ENCODE measurements at regions of chr16 and their contacts with region 1.

Region 1: GRCh38 chr16:3457434-3458252 is 14.2 kb downstream of the NAA60 start:
- DNase-seq: peak; percentile 49
- ATAC-seq: peak; percentile 93
- H3K4me3 ChIP-seq: peak overlapping the region; percentile 77
- H3K27ac ChIP-seq: peak overlapping the region; percentile 94
- H3K4me1 ChIP-seq: peaks cover 21% of the 10 kb centered on the region
- H3K27me3 ChIP-seq: no peaks in the 10 kb centered on the region
- CTCF ChIP-seq: peak; percentile 46 to 71 (median 61)
- EP300 ChIP-seq: no peak
- POLR2A ChIP-seq: peak; percentile 98
- RAD21 ChIP-seq: peak; percentile 37; the same call in 1 of the 2 replicates

Region 2: DNA sequence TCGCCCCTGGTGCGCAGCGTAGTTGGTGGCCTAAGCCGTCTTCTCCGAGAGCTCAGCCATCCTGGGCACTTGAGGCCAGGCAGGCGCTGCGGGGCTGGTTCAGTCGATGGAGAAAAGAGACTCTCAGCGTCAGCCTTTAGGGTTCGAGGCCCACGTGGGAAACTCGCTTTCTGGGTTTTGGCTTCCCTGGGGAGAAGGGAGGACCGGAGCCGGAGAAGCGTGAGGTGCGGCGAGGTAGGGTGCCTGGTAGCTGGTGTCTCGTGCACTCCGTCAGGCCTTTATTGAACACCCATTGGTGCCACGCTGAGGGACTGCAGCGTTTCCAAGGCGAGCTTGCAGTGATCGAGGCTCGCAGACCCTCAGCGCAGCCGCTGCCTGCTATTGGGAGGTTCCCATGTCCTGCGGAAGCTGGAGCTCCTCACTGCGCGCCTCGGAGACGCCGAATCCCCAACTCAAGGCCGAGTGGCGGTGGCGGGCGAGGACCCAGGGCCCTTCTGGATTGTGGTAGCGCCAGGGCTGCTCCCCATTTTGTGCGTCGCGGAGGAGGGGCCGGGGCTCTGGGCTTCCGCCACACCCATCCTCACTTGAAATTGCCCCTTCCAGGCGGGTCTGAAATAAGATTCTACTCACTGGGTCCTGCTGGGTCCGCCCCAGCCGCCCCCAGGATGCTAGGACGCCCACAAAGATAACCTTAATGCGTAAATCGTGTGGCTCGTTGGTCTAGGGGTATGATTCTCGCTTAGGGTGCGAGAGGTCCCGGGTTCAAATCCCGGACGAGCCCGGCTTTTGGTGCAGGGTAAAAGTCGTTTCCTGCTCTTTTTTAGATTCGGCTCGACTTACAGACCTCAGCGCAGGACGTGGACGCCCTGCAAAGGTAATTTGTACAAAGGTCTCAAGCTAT is 268.5 kb before region 1 on chr16:
- CTCF ChIA-PET with region 1: no interaction called
- POLR2A ChIA-PET with region 1: no interaction called
- RAD21 ChIA-PET with region 1: no interaction called
- SMC1A ChIA-PET with region 1: interaction called, 3 read pairs
- in situ Hi-C with region 1: no loop called
- intact Hi-C with region 1: loop called (anchors 2 kb)
- DNase-seq: no peak
- ATAC-seq: peak; percentile 77
- H3K4me3 ChIP-seq: peak overlapping the region; percentile 54
- H3K27ac ChIP-seq: no peak overlapping the region
- H3K4me1 ChIP-seq: peaks cover 17% of the 10 kb centered on the region
- H3K27me3 ChIP-seq: no peaks in the 10 kb centered on the region; a peak in 1 of 4 replicates
- CTCF ChIP-seq: no peak
- EP300 ChIP-seq: no peak
- POLR2A ChIP-seq: peak; percentile 42; the same call in 1 of the 2 replicates
- RAD21 ChIP-seq: no peak

Region 3: DNA sequence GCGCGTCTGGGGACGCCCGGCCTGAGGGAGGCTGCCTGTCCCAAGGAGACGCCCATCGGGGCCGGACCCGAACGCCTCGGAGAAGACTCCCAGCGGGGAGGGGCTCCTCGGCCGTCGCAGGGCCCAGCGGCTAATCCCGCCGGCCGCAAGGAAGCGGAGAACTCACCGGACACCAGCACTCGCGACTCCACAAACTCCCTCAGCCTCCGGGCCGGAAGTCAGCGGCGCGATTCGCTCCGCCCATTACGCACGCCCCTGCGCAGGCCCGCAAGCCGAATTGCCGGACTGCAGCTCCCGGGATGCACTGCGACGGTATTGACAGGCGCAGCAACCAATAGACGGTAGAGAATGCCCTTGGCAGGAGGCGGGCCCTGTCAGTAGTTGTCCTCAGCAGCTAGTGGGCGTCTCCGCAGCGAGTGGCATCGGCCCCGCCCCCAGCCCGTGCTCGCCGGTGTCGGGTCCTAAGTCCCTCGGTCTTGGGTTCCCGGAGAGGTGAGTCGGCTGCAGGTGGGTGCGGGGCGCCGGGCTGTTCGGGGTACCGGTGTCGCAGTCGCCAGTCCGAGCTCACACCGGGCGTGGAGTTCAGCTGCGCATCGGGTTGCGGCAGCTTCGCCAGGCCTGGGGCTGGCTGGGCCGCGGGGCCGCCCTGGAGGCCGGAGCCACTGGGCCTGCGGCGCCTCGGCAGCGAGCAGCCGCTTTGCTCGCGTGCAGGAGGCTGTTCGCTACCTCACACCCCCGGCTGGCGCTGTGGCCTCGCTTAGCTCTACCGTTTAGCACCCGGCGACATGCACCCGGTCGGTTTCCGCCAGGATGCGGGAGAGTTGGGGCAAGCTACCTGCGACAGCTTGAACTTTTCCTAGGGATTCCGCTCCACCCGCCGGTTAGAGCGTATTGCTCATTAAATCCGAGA is 56.6 kb before region 1 on chr16 and contains the starts of genes ZNF174 and ZSCAN32:
- CTCF ChIA-PET with region 1: interaction called, 4 read pairs
- POLR2A ChIA-PET with region 1: interaction called, 3 read pairs
- RAD21 ChIA-PET with region 1: no interaction called
- SMC1A ChIA-PET with region 1: interaction called, 5 read pairs
- in situ Hi-C with region 1: no loop called
- intact Hi-C with region 1: loop called (anchors 1 kb)
- DNase-seq: peak; percentile 99
- ATAC-seq: peak; percentile 98
- H3K4me3 ChIP-seq: peak within 1 kb of the TSS; percentile 93
- H3K27ac ChIP-seq: peak within 1 kb of the TSS; percentile 71
- H3K4me1 ChIP-seq: peaks cover 4% of the 10 kb centered on the region; the same call in 1 of the 2 replicates
- H3K27me3 ChIP-seq: no peaks in the 10 kb centered on the region
- CTCF ChIP-seq: no peak
- EP300 ChIP-seq: no peak
- POLR2A ChIP-seq: peak; percentile 90
- RAD21 ChIP-seq: no peak
- polyA plus RNA-seq, gene ZNF174: 3.0 to 4.7 TPM
- polyA plus RNA-seq, gene ZSCAN32: 12.8 to 15.2 TPM

Region 4: DNA sequence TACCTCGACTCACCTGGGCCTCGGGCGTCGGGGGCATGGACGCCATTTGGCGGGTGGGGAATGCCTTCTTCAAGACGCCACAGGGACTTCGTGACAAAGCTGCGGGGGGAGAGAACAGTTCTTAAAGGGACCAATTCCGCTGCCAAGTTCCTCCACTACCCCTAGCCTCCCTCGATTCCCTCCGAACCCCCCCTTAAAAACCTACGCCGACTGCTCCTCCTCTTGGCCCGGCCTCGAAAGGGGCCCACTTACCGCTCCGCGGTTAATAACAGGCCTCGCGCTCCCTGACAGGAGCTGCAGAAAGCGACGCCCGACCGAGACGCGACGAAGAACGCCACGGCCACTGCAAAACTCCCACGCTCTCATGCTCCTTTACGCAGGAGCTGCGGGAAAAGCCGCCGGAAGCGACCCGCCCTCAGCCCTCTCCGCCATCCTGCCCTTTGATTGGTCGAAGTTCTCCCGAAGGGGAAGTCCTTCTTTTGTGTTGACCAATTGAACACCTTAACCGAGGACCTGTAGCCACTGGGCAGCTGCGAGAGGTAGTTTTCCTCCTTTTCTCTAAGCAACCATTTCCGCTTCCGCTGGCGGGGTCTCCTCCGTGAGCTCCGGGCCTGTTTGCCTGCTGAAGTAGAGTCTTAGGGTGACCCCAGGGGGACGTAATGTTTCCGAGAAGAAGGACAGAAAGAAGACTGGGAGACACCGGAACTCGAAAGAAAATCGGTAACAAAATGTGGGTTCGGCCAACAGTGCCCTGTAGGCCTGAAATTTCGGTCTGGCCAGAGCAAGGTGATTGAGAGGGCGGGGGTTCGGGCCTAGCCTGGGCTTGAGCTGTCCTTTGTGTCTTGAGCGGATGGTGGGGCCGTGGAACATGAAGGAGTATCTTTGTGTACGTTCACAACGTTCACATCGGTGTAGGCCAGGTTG is 14.3 kb before region 1 on chr16 and contains the starts of genes NAA60 and ZNF597:
- CTCF ChIA-PET with region 1: interaction called, 8 read pairs
- POLR2A ChIA-PET with region 1: interaction called, 10 read pairs
- RAD21 ChIA-PET with region 1: no interaction called
- SMC1A ChIA-PET with region 1: interaction called, 7 read pairs
- in situ Hi-C with region 1: no loop called
- intact Hi-C with region 1: no loop called
- DNase-seq: peak; percentile 74
- ATAC-seq: peak; percentile 99
- H3K4me3 ChIP-seq: peak within 1 kb of the TSS; percentile 74
- H3K27ac ChIP-seq: peak within 1 kb of the TSS; percentile 75
- H3K4me1 ChIP-seq: no peaks in the 10 kb centered on the region
- H3K27me3 ChIP-seq: no peaks in the 10 kb centered on the region
- CTCF ChIP-seq: no peak
- EP300 ChIP-seq: no peak
- POLR2A ChIP-seq: peak; percentile 85
- RAD21 ChIP-seq: peak; percentile 23; the same call in 1 of the 2 replicates
- polyA plus RNA-seq, gene NAA60: 6.2 to 9.1 TPM
- polyA plus RNA-seq, gene ZNF597: 0.80 to 0.85 TPM

Region 5: DNA sequence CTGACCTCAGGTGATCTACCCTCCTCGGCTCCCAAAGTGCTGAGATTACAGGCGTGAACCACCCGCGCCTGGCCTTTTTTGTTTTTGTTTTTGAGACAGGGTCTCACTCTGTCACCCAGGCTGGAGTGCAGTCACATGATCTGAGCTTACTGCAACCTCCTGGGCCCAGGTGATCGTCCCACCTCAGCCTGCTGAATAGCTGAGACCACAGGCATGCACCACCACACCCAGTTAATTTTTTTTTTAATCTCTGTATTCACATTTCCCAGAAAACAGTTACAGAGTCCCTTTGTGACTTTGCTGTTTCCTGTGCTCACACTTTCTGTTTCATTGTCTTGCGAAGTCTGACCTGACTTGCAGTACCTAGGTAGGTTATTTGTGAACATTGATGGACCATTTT is 45.9 kb after region 1 on chr16:
- CTCF ChIA-PET with region 1: no interaction called
- POLR2A ChIA-PET with region 1: no interaction called
- RAD21 ChIA-PET with region 1: no interaction called
- SMC1A ChIA-PET with region 1: no interaction called
- in situ Hi-C with region 1: no loop called
- intact Hi-C with region 1: loop called (anchors 5 kb)
- DNase-seq: no peak
- ATAC-seq: peak; percentile 8; the same call in 2 of the 3 replicates
- H3K4me3 ChIP-seq: no peak overlapping the region
- H3K27ac ChIP-seq: no peak overlapping the region
- H3K4me1 ChIP-seq: peaks cover 12% of the 10 kb centered on the region
- H3K27me3 ChIP-seq: no peaks in the 10 kb centered on the region
- CTCF ChIP-seq: no peak
- EP300 ChIP-seq: no peak
- POLR2A ChIP-seq: no peak
- RAD21 ChIP-seq: no peak